ENCODE measurements at regions of chr10 and their contacts with region 1.

Region 1: DNA sequence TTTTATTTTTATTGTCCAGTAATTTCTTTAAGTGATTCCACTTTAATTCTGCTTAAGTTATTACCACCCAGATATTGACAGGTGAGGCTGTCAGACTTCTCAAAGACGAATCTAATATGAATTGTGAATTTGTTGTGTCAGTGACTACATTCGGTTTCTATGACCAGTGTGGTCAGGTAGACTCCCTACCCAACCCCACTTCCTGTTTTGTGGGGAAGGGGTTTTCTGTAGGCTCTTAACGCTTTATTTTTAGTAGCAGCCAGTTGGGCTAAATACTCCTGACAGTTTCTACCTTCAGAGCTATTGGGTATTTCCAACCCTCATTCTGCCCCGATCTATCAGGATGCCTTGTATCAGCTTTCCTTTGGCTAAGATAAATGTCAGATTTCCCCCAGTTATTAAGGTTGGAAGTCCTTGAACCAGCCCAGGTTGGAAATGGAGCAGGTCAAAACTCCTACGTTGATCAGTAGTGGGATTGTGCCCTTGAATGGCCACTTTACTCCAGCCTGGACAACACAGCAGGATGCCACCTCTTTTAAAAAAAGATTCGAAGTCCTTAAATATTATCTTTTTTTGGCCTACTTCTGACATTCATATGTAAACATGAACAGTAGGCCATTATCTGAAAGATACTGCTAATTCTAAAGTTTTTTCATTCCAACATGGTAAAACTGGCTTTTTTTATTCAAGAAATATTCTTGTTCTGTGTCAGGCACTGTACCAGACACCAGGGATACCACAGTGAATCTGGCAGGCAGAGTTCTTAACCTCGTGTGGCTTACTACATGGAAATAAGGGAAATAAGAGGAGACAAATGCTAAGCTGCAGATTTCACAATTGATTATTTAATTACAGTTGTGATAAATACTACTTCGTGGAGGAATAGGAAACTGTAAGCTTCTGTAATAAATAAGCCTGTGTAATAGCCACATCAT is 133.3 kb upstream of the SAMD8 start:
- DNase-seq: peak; percentile 84
- H3K4me3 Mint-ChIP-seq: peak overlapping the region; percentile 9
- H3K27ac Mint-ChIP-seq: peak overlapping the region; percentile 72
- H3K4me1 Mint-ChIP-seq: peaks cover 36% of the 10 kb centered on the region
- H3K27me3 Mint-ChIP-seq: no peaks in the 10 kb centered on the region

Region 2: DNA sequence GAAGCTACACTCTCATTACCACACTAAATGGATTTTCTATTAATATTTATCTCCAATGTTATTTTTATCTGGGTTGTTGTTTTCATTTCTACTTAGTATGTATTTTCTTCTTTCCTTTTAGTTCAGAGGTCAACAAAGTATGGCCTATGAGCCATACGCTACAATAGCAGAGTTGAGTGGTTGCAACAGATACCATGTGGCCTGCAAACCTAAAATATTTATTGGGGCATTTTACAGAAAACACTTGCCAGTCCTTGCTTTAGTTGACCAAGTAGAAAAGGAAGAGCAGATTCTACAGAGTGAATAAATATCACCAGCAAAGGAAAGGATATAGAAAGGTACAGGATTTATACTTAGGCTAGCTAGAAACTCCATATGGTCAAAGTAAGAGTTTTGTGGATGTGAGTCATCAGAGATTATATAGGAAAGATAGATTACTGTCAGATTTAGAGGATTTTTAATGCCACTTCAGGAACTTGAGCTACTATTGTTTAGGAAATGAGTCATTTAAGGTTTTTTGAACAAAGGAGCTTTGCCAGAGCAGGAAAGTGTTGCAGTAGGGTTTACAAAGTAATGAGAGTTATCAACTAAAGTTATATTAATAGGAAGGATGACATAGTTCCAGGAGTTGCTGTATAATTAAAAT is 475.1 kb before region 1 on chr10:
- CTCF ChIA-PET with region 1: interaction called, 4 read pairs
- intact Hi-C with region 1: loop called (anchors 5 kb)
- DNase-seq: no peak
- H3K4me3 Mint-ChIP-seq: no peak overlapping the region
- H3K27ac Mint-ChIP-seq: peak overlapping the region; percentile 75
- H3K4me1 Mint-ChIP-seq: peaks cover 52% of the 10 kb centered on the region
- H3K27me3 Mint-ChIP-seq: no peaks in the 10 kb centered on the region

Region 3: DNA sequence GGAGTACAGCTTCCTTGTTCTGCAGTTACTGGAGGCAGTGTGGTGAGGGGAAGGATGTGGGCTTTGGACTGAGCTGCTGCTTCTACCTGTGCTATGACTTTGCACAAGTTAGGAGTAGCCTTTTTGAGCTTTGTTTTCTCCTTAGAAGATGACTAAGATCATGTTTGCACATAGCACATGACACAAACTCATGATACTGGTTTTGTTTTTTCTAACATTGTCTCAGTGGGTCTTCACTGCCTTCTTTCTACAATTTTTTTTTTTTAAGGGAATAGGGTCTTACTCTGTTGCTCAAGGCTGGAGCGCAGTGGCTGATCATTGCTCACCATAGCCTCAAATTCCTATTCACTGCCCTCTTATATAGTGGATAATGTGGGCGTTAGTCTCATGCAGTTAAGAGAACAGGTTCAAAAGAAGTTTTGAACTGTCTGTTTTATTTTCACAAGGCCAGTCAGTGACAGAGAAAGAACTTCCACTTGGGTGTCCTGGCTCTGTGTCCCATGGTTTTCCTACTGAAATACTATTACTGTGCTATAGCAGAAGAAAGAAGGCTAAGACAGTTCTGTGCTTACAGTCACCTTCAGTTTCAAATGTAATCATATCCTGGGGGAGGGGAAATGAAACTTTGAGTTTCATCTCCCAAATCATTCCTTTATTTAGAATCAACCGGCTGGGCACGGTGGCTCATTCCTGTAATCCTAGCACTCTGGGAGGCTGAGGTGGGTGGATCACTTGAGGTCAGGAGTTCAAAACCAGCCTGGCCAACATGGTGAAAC is 79.8 kb before region 1 on chr10:
- CTCF ChIA-PET with region 1: no interaction called
- intact Hi-C with region 1: loop called (anchors 1 kb)
- DNase-seq: peak; percentile 70
- H3K4me3 Mint-ChIP-seq: no peak overlapping the region
- H3K27ac Mint-ChIP-seq: peak overlapping the region; percentile 46
- H3K4me1 Mint-ChIP-seq: peaks cover 57% of the 10 kb centered on the region
- H3K27me3 Mint-ChIP-seq: no peaks in the 10 kb centered on the region

Region 4: DNA sequence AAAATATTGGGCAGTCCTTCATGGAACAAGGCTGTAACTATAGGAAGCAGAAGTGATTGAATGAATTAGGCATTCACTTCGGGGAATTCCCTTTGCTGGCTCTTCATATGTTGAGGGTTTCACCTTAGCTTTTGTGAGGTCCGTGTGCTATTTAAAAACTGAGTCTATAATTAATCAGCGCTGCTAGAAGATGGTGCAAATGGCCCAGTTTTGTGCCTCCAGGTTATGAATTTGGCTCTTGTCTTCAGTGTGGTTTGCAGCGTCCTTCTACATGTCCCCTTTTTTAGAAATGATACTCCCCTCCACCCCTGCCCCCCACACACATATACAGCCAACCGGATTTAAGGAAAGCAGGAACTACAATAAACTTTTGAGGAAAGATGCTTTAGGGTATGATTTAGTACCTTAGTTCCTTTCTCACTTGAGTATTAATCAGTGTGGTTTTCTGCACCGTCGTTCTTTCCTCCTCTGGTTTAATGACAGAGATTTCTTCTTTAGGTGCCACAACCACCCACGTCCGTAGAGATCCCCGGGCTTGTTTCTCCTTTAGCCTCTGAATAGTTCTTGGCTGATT is 22.7 kb after region 1 on chr10:
- CTCF ChIA-PET with region 1: interaction called, 5 read pairs
- intact Hi-C with region 1: loop called (anchors 1 kb)
- DNase-seq: no peak
- H3K4me3 Mint-ChIP-seq: no peak overlapping the region
- H3K27ac Mint-ChIP-seq: no peak overlapping the region
- H3K4me1 Mint-ChIP-seq: peaks cover 15% of the 10 kb centered on the region
- H3K27me3 Mint-ChIP-seq: no peaks in the 10 kb centered on the region

Region 5: DNA sequence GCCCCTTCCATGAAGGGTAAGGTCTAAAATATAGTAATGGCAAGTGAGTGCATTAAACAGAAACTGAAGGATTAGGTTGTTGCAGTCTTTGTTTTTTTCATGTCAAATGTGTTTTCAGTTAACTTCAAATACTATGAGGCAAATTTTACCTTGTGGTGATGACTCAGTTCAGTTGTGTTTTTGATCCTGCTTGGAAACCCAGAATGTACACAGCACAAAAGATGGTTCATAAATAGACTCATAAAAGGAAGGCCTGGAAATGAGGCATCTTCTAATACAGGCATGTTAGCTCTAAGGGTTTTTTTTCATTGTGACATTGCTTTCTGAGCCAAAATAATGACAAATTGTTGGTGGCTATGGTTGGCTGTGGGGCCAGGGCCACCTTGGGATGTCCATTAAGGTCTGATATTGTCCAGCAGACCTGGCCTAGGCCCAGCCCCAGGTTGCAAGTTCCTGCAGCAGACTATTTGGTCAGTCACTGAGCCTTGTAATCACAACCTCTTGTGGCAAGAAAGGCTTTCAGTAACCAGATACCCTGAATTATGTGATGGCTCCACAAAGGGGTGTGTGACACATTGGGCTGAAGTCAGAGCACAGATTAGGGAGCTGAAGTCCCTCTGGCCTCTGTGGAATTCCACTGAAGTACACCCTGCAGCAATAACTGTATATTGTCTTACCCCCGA is 64.3 kb after region 1 on chr10:
- CTCF ChIA-PET with region 1: no interaction called
- intact Hi-C with region 1: loop called (anchors 2 kb)
- DNase-seq: peak; percentile 30
- H3K4me3 Mint-ChIP-seq: peak overlapping the region; percentile 20
- H3K27ac Mint-ChIP-seq: peak overlapping the region; percentile 87
- H3K4me1 Mint-ChIP-seq: peaks cover 45% of the 10 kb centered on the region
- H3K27me3 Mint-ChIP-seq: peaks cover 7% of the 10 kb centered on the region

Region 6: GRCh38 chr10:75250910-75251309 is 272.7 kb after region 1 on chr10:
- CTCF ChIA-PET with region 1: no interaction called
- intact Hi-C with region 1: no loop called
- DNase-seq: no peak
- H3K4me3 Mint-ChIP-seq: no peak overlapping the region
- H3K27ac Mint-ChIP-seq: no peak overlapping the region
- H3K4me1 Mint-ChIP-seq: no peaks in the 10 kb centered on the region
- H3K27me3 Mint-ChIP-seq: no peaks in the 10 kb centered on the region